ENCODE measurements at regions of chr2 and their contacts with region 1.

Region 1: DNA sequence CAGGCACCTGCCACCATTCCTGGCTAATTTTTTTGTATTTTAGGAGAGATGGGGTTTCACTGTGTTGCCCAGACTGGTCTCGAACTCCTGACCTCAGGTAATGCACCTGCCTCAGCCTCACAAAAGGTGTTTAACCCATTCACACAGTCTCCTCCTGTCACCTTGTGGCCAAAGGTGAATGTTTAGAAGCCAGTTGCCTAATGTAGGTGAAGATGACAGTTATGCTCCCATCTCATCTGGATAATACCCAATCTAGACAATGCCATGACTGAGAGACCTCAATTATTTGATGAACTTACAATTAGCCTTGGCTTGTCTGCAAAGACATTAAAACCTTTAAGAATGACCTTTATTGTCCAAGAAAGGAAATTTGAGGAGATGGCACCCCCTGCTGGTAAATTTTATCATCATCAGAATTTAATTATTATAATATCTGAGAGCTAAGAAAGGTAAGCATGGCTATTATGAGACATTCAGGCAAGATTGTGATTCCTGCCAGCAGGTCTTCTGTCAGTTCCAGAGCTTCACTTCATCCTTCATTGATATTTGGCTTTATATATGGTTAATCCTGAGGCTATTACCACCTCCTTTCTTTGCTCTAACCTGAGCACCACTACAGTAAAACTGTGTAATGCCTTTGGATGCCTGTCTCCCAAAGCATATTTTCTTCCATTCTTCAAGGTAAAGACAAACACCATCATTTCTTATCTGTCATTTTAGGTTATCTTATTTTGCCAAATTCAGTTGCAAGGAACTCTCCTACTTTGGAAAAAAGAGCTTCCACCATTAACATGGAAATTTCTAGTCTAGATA is 117.6 kb downstream of the FAM124B start:
- DNase-seq: no peak
- ATAC-seq: no peak
- H3K4me3 ChIP-seq: no peak overlapping the region
- H3K27ac ChIP-seq: no peak overlapping the region
- H3K4me1 ChIP-seq: no peaks in the 10 kb centered on the region
- H3K27me3 ChIP-seq: no peaks in the 10 kb centered on the region
- CTCF ChIP-seq: peak; percentile 65

Region 2: DNA sequence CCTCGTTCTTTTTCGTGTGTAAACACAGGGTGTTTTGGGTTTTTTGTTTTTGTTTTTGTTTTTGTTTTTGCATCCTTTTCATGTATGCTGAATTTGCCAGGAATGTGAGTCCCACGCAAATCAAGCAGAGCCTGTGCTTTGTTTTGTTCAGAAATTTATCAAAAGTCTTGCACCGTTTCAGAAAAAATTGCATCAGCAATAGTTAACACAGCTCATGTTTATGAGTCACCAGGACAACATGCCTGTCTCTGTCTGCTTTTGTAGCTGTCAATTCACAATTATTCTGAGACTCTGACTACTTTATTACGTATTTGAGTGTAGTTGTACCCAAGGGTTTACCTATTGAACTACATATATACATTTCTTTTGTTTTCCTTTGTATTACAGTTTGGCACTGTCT is 288.8 kb before region 1 on chr2:
- intact Hi-C with region 1: loop called (anchors 5 kb)
- DNase-seq: no peak
- ATAC-seq: no peak
- H3K4me3 ChIP-seq: no peak overlapping the region
- H3K27ac ChIP-seq: no peak overlapping the region
- H3K4me1 ChIP-seq: no peaks in the 10 kb centered on the region
- H3K27me3 ChIP-seq: no peaks in the 10 kb centered on the region
- CTCF ChIP-seq: no peak